Colonic mucosa (tissue), 4 donors: ENCODE measurements at regions of chr12 and their contacts with region 1.

Region 1: DNA sequence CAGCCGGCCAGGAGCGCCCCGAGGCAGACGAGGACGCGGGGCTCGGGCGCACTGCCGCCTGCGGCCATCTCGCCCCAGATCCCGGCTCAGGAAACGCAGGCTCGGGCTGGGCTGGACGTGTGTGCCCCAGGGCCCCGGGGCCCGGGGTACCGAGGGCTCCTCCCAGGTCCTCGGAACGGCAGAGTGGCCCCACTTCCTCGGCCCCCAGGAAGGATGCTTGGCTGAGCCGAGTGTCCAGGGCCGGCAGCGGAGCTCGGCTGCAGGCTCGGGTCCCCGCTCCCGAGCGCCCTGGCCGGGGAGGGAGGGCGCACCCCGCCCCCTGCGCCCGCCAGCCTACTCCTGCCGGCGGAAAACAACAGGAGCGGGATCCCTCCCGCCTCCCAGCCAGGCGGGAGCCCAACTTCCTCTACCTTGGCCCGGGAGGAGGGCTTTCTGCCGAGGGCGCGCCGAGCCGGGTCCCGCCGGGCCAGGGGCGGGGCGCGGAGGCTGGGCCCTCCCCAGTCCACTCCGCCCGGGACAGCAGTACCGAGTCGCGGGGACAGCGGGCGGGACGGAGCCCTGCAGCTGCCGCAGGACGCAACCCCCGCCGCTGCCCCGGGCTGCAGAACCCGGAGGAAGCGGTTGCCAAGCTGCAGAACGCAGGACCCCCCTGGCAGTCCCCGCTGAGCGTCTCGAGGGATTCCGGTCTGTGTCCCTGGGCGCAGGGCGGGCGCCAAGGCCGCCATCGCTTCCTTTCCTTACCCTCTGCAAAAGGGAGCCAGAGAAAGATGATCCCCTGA is at the start of gene VSIG10:
- DNase-seq: peak; percentile 88
- H3K4me3 ChIP-seq: peak within 1 kb of the TSS; percentile 95
- H3K27ac ChIP-seq: peak within 1 kb of the TSS; percentile 89
- H3K4me1 ChIP-seq: peaks cover 4% of the 10 kb centered on the region
- H3K27me3 ChIP-seq: no peaks in the 10 kb centered on the region
- CTCF ChIP-seq: no peak
- total RNA-seq, gene VSIG10: 60.0 to 69.0 TPM

Region 2: GRCh38 chr12:118061011-118061875 is 42.5 kb before region 1 on chr12 and contains the start of gene WSB2:
- intact Hi-C with region 1: loop called (anchors 5 kb)
- DNase-seq: peak; percentile 85
- H3K4me3 ChIP-seq: peak within 1 kb of the TSS; percentile 72
- H3K27ac ChIP-seq: peak within 1 kb of the TSS; percentile 98
- H3K4me1 ChIP-seq: peaks cover 20% of the 10 kb centered on the region
- H3K27me3 ChIP-seq: no peaks in the 10 kb centered on the region
- CTCF ChIP-seq: no peak
- total RNA-seq, gene WSB2: 99.1 to 120 TPM